ENCODE measurements at regions of chr12 and their contacts with region 1.

Region 1: DNA sequence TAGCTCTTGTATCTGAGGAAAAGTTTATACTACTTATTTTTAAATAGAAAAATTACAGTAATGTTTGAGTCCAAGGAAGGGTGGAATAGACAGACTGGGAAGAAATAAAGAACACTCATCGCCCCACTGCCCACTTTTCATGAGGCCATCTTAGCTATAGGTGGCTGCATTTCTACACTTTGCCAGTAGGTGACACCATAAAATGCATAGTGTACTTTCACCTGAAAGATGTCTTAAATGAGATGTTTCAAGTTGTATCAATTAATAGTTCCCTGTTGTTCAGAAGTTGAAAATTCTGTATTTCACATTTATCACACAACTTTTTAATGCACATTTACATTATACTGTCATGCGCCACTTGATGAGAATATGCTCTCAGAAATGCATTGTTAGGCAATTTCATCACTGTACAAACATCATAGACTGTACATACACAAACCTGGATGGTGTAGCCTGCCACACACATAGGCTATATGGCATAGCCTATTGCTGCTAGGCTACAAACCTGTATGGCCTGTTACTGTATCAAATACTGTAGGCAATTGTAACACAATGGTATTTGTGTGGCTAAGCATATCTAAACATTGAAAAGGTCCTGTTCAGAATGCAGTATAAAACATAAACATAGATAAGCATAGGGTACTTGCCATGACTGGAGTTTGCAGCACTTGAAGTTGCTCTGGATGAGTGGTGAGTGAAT is 27.6 kb downstream of the PMCH start:
- DNase-seq: peak; percentile 69
- H3K4me3 ChIP-seq: no peak overlapping the region
- H3K27ac ChIP-seq: no peak overlapping the region
- H3K4me1 ChIP-seq: peaks cover 26% of the 10 kb centered on the region
- H3K27me3 ChIP-seq: no peaks in the 10 kb centered on the region
- CTCF ChIP-seq: peak; percentile 62 to 64
- POLR2A ChIP-seq: no peak

Region 2: GRCh38 chr12:102182635-102183034 is 12.6 kb after region 1 on chr12:
- CTCF ChIA-PET with region 1: interaction called, 9 read pairs
- POLR2A ChIA-PET with region 1: no interaction called
- dilution Hi-C with region 1: no loop called
- intact Hi-C with region 1: loop called (anchors 1 kb)
- DNase-seq: peak; percentile 91
- H3K4me3 ChIP-seq: no peak overlapping the region
- H3K27ac ChIP-seq: peak overlapping the region; percentile 61
- H3K4me1 ChIP-seq: peaks cover 19% of the 10 kb centered on the region
- H3K27me3 ChIP-seq: no peaks in the 10 kb centered on the region
- CTCF ChIP-seq: no peak
- POLR2A ChIP-seq: peak; percentile 25

Region 3: DNA sequence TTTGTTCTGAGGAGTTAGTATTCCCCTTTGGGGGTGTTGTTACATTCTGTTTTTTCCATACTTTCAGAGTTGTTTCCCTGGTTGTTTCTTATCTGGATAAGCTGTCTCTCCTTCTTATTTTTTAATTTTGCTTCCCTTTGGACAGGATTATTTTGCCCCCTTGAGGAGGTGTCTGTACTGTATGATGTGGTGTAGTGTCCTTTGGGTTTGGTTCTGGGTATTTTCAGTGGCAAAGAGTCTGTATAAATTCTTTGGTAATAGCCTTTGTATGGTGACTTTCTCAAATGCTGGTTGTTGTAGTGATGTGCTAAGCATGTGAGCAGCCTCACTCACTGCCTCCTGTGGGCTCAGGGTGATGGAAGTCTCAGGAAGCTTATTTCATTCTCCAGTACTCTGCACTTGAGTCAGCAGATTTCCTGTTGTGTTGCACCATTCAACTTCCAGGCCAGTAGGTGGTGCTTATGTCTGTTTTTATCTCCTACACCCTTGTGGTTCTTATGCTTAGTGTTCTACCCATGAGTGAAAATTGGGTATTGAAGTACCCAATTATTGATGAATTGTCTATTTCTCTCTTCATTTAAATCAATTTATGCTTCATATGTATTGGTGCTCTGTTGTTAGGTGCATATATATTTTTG is 130.9 kb after region 1 on chr12:
- CTCF ChIA-PET with region 1: interaction called, 13 read pairs
- POLR2A ChIA-PET with region 1: no interaction called
- dilution Hi-C with region 1: no loop called
- intact Hi-C with region 1: loop called (anchors 1 kb)
- DNase-seq: peak; percentile 50
- H3K4me3 ChIP-seq: no peak overlapping the region
- H3K27ac ChIP-seq: no peak overlapping the region
- H3K4me1 ChIP-seq: no peaks in the 10 kb centered on the region
- H3K27me3 ChIP-seq: no peaks in the 10 kb centered on the region
- CTCF ChIP-seq: peak; percentile 24 to 38
- POLR2A ChIP-seq: no peak

Region 4: DNA sequence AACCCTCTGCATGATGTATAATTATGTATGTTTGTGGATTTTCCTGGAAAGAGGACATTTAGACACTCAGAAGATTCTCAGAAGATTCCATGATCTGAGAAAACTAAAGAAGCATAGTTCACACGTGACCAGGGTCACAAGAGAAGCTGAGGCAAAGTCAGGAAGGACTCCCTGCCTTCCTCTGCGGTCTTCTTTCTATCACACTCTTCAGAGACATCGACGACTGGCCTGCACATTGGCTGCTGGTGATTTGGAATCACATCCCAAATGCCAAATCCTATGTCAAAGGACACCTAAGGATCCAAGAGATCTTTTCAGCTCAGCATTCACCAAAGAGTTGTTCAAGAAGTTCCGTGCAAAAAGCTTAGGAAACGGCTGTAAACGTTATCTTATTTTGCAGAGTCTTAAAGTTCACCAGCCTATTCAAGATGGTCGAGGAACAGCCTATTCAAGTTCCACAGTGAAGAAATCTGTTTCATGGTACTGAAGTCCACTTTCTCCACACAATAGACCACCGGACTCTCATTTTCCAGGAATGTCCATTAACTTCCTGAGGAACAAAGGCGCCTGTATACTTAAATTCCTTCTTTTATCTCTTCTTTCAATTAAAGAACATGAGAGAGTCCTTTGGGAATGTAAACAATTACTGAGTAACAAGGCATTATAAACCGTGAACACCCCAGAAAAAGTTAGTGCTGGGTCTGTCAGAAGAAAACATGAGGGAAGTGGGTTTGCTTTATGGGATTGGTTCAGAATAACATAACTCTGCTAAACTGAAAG is 268.2 kb after region 1 on chr12:
- CTCF ChIA-PET with region 1: no interaction called
- POLR2A ChIA-PET with region 1: no interaction called
- dilution Hi-C with region 1: no loop called
- intact Hi-C with region 1: loop called (anchors 2 kb)
- DNase-seq: peak; percentile 42
- H3K4me3 ChIP-seq: no peak overlapping the region
- H3K27ac ChIP-seq: peak overlapping the region; percentile 90
- H3K4me1 ChIP-seq: peaks cover 30% of the 10 kb centered on the region
- H3K27me3 ChIP-seq: no peaks in the 10 kb centered on the region
- CTCF ChIP-seq: no peak
- POLR2A ChIP-seq: no peak

Region 5: DNA sequence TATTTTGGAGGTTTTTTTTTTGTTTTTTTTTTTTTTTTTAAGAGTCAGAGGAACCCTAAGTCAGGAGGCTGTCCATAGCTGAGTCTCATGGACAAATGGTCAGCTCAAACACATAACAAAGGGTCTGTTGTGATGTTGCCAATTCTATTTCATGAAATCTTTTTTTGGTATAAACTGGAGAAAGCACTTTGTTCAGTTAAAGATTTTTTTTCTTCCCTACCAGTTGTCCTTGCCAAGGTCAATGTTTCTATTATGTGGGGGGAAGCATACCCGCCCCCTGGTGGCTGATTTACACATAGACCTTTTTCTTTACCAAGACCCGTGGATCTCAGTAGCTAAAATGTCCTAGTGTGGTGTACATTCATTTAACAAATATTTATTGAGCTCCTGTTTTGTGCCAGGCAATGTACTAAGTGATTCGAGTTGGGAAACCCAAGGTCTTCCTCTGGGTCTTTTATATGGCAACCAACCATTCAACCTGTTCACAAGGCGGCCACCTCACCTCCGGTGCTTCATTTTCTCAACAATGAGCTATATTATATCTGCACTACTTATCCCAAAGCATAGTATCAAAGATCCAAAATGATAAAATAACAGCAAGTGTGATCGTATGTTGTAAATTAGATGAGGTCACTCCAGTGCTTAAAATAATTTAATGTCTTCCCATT is 532.5 kb after region 1 on chr12:
- CTCF ChIA-PET with region 1: interaction called, 7 read pairs
- POLR2A ChIA-PET with region 1: no interaction called
- dilution Hi-C with region 1: no loop called
- intact Hi-C with region 1: loop called (anchors 2 kb)
- DNase-seq: peak; percentile 24
- H3K4me3 ChIP-seq: no peak overlapping the region
- H3K27ac ChIP-seq: no peak overlapping the region
- H3K4me1 ChIP-seq: no peaks in the 10 kb centered on the region
- H3K27me3 ChIP-seq: no peaks in the 10 kb centered on the region
- CTCF ChIP-seq: peak; percentile 37 to 52
- POLR2A ChIP-seq: no peak